ENCODE measurements at regions of chr18 and their contacts with region 1.

Region 1: GRCh38 chr18:58671111-58671631 is at the start of gene MALT1:
- DNase-seq: peak; percentile 87 to 99 (median 96)
- ATAC-seq: peak; percentile 84
- H3K4me3 ChIP-seq: peak within 1 kb of the TSS; percentile 90
- H3K4me3 Mint-ChIP-seq: peak within 1 kb of the TSS; percentile 99
- H3K27ac ChIP-seq: peak within 1 kb of the TSS; percentile 52 to 64
- H3K27ac Mint-ChIP-seq: peak within 1 kb of the TSS; percentile 96
- H3K4me1 ChIP-seq: peaks cover 44% of the 10 kb centered on the region
- H3K4me1 Mint-ChIP-seq: peaks cover 68% of the 10 kb centered on the region
- H3K27me3 ChIP-seq: no peaks in the 10 kb centered on the region
- H3K27me3 Mint-ChIP-seq: no peaks in the 10 kb centered on the region
- CTCF ChIP-seq: no peak
- total RNA-seq, gene MALT1: 82.3 to 84.5 TPM

Region 2: DNA sequence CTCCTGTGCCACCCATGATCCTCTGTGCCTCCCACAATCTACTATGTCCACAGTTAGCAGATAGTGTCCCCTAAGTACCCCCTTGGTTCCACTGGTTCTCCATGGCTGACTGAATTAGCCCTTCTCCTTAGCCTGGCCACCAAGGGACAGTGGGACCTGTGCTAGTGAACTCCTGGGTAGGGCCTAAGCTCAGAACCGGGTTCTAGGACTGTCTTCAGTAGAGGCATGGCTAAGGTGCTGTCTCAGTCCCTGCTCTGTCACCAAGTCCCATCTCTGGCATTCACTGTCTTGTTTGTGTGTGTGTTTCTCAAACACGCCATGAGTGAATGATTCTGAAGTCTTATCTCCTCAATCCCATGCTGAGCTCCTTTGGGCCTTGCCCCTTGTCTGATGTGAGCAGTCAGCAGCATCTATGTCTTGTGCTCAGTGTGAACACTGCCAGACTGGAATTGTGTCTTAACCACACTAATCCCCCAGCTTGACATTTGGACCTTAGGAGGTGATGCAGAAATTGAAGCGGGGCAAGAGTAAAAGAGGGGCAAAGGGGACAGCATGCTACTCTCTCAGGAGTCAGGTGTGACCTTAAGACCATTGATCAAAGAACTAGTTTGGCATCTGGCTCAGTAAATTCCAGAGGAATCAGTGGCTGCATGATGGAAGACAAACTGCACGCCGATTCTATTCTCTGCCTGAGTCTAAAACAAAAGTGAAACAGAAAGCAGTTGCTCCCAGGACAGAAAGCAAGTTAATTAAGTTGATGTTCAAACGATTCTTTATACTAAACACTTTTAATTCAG is 232.8 kb before region 1 on chr18:
- CTCF ChIA-PET with region 1: no interaction called
- POLR2A ChIA-PET with region 1: no interaction called
- intact Hi-C with region 1: no loop called
- DNase-seq: peak in 4 of 14 experiments; percentile 8 to 53 (median 27)
- ATAC-seq: no peak
- H3K4me3 ChIP-seq: peak overlapping the region; percentile 44
- H3K4me3 Mint-ChIP-seq: peak overlapping the region; percentile 68
- H3K27ac ChIP-seq: no peak overlapping the region
- H3K27ac Mint-ChIP-seq: peak overlapping the region; percentile 12
- H3K4me1 ChIP-seq: peaks cover 17% of the 10 kb centered on the region
- H3K4me1 Mint-ChIP-seq: peaks cover 19% of the 10 kb centered on the region
- H3K27me3 ChIP-seq: no peaks in the 10 kb centered on the region
- H3K27me3 Mint-ChIP-seq: no peaks in the 10 kb centered on the region
- CTCF ChIP-seq: no peak

Region 3: GRCh38 chr18:58625839-58626238 is 45.3 kb before region 1 on chr18:
- CTCF ChIA-PET with region 1: no interaction called
- POLR2A ChIA-PET with region 1: interaction called, 8 read pairs
- intact Hi-C with region 1: loop called in 1 of 2 experiments (anchors 5 kb)
- DNase-seq: peak in 3 of 14 experiments; percentile 32 to 47 (median 36)
- ATAC-seq: no peak
- H3K4me3 ChIP-seq: no peak overlapping the region
- H3K4me3 Mint-ChIP-seq: no peak overlapping the region
- H3K27ac ChIP-seq: no peak overlapping the region
- H3K27ac Mint-ChIP-seq: peak overlapping the region; percentile 66
- H3K4me1 ChIP-seq: peaks cover 16% of the 10 kb centered on the region
- H3K4me1 Mint-ChIP-seq: peaks cover 32% of the 10 kb centered on the region
- H3K27me3 ChIP-seq: no peaks in the 10 kb centered on the region
- H3K27me3 Mint-ChIP-seq: no peaks in the 10 kb centered on the region
- CTCF ChIP-seq: no peak

Region 4: DNA sequence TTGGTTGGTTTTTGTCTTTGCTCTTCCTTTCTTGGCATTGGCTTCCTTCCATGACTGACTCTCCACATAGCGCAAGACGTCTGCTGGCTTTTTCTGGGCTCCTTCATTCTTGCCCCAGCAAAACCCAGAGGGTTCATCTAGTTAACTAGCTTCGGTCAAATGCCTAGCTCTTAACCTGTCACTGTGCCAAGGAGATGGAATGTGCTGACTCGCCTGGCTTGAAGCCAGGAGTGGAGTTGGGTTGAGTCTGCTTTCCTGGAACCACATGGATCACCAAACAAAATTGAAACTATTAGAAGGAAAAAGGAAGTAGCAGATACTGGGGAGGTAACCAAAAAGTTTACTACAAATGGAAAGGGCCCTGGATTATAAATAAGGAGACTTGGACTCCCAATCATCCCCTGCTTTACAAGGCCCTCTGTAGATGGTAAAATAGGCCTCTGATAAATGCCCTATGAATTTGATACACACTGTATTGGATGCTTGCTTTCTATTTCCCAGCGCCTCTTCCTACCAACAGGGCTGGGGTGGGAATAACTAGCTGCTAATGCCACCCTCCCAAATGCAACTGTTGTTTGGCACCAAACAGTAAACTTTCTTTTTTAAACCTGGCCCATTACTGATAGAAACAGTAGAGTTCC is 11.4 kb after region 1 on chr18:
- CTCF ChIA-PET with region 1: interaction called, 16 read pairs
- POLR2A ChIA-PET with region 1: interaction called, 270 read pairs
- intact Hi-C with region 1: loop called in 1 of 2 experiments (anchors 1 kb)
- DNase-seq: no peak
- ATAC-seq: no peak
- H3K4me3 ChIP-seq: no peak overlapping the region
- H3K4me3 Mint-ChIP-seq: no peak overlapping the region
- H3K27ac ChIP-seq: no peak overlapping the region
- H3K27ac Mint-ChIP-seq: peak overlapping the region; percentile 29
- H3K4me1 ChIP-seq: peaks cover 38% of the 10 kb centered on the region
- H3K4me1 Mint-ChIP-seq: peaks cover 84% of the 10 kb centered on the region
- H3K27me3 ChIP-seq: no peaks in the 10 kb centered on the region
- H3K27me3 Mint-ChIP-seq: no peaks in the 10 kb centered on the region
- CTCF ChIP-seq: no peak

Region 5: GRCh38 chr18:58716060-58716756 is 45.0 kb after region 1 on chr18:
- CTCF ChIA-PET with region 1: no interaction called
- POLR2A ChIA-PET with region 1: interaction called, 39 read pairs
- intact Hi-C with region 1: loop called in 1 of 2 experiments (anchors 5 kb)
- DNase-seq: peak in 4 of 14 experiments; percentile 13 to 73 (median 65)
- ATAC-seq: peak; percentile 83
- H3K4me3 ChIP-seq: no peak overlapping the region
- H3K4me3 Mint-ChIP-seq: peak overlapping the region; percentile 74
- H3K27ac ChIP-seq: no peak overlapping the region
- H3K27ac Mint-ChIP-seq: peak overlapping the region; percentile 89
- H3K4me1 ChIP-seq: peaks cover 16% of the 10 kb centered on the region
- H3K4me1 Mint-ChIP-seq: peaks cover 73% of the 10 kb centered on the region
- H3K27me3 ChIP-seq: no peaks in the 10 kb centered on the region
- H3K27me3 Mint-ChIP-seq: no peaks in the 10 kb centered on the region
- CTCF ChIP-seq: no peak

Region 6: GRCh38 chr18:59139371-59140298 is 468.5 kb after region 1 on chr18 and contains the start of gene SEC11C:
- CTCF ChIA-PET with region 1: no interaction called
- POLR2A ChIA-PET with region 1: interaction called, 3 read pairs
- intact Hi-C with region 1: loop called in 1 of 2 experiments (anchors 10 kb)
- DNase-seq: peak; percentile 91 to 98 (median 94)
- ATAC-seq: peak; percentile 87
- H3K4me3 ChIP-seq: peak within 1 kb of the TSS; percentile 78
- H3K4me3 Mint-ChIP-seq: peak within 1 kb of the TSS; percentile 93
- H3K27ac ChIP-seq: peak within 1 kb of the TSS; percentile 94 to 99
- H3K27ac Mint-ChIP-seq: peak within 1 kb of the TSS; percentile 98
- H3K4me1 ChIP-seq: peaks cover 32% of the 10 kb centered on the region
- H3K4me1 Mint-ChIP-seq: peaks cover 38% of the 10 kb centered on the region
- H3K27me3 ChIP-seq: peaks cover 0 to 9% of the 10 kb centered on the region in 2 experiments
- H3K27me3 Mint-ChIP-seq: peaks cover 18% of the 10 kb centered on the region
- CTCF ChIP-seq: no peak
- total RNA-seq, gene SEC11C: 42.0 to 44.1 TPM

Measured in CD4-positive, alpha-beta T cell (primary cell).